Body of pancreas (tissue), 4 donors: ENCODE measurements at regions of chr11 and their contacts with region 1.

Region 1: DNA sequence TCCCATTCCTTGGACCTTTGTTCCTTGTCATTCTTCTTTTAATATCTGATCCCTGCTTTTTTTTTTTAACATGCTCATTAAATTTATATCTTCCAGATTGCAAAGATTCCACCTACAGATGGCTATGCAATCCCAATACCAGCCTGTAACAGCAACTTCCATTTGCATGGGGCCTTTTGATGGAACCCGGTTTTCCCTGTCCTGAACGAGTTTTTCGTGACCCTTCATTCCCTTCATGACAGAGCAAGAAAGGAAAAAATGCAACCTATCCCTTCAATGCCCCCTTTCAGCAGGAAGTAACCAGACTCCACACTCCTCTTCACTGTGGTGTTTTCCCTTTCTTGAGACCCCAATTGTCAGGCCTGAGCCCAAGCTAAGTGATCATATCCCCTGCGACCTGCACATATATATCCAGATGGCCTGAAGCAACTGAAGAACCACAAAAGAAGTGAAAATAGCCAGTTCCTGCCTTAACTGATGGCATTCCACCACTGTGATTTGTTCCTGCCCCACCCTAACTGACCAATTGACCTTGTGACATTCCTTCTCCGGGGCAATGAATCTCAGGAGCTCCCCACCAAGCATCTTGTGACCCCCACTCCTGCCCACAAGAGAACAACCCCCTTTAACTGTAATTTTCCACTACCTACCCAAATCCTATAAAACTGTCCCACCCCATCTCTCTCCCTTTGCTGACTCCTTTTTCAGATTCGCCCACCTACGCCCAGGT is 39.8 kb upstream of the AQP11 start:
- DNase-seq: no peak
- ATAC-seq: no peak
- H3K4me3 ChIP-seq: no peak overlapping the region
- H3K27ac ChIP-seq: no peak overlapping the region
- H3K4me1 ChIP-seq: no peaks in the 10 kb centered on the region
- H3K27me3 ChIP-seq: no peaks in the 10 kb centered on the region
- CTCF ChIP-seq: no peak
- POLR2A ChIP-seq: no peak

Region 2: DNA sequence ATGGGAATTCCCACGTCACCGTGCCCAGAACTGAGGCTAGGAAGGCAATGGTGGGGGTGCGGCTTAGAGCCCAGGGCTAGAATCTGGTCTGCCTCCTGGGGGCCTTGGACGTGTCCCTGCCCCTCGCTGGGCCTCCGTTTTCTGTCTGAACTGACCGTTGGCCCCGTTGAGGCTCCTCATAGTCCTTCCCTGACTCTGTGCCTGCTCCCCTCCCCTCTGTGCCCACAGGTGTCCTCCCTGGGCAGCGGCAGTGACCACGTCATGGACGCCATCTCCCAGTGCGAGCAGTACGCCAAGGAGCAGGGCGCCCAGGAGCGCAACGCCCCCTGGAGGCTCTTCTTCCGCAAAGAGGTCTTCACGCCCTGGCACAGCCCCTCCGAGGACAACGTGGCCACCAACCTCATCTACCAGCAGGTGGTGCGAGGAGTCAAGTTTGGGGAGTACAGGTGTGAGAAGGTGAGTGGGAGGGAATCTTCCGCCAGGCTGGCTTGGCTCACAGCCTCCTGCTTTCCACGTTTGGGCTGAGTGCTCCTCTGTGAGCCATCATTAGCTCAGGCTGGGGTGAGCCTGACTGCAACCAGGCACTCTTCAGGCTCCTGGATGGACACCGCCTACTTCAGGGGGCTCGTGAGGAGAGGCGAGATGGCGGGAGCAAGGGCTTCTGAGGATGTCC is 358.0 kb before region 1 on chr11:
- intact Hi-C with region 1: loop called (anchors 5 kb)
- DNase-seq: peak; percentile 85 to 93 (median 91)
- ATAC-seq: peak; percentile 91
- H3K4me3 ChIP-seq: no peak overlapping the region
- H3K27ac ChIP-seq: peak overlapping the region in 3 of 4 donors; percentile 12 to 54 (median 34)
- H3K4me1 ChIP-seq: peaks cover 12% of the 10 kb centered on the region
- H3K27me3 ChIP-seq: no peaks in the 10 kb centered on the region
- CTCF ChIP-seq: peak; percentile 77 to 98 (median 91)
- POLR2A ChIP-seq: peak in 2 of 3 donors; percentile 23 to 55

Region 3: DNA sequence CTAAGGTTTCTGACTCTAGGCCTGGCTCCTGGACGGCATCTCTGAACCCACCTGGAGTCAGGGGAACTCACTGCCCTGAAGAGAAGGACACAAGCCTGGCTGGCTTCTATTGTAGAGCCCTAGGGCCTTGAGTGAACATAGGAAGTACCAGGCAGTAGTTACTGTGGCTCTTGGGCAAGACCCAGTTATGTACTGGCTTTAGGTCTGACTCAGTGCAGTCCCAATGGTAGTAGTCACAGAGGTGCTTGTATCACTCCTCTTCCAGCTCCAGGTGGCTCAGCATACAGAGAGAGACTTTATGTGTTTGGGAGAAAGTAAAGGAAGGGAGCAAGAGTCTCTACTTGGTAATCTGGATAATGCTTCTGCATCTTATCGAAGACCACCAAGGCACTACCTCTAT is 62.2 kb before region 1 on chr11:
- intact Hi-C with region 1: no loop called
- DNase-seq: no peak
- ATAC-seq: no peak
- H3K4me3 ChIP-seq: no peak overlapping the region
- H3K27ac ChIP-seq: no peak overlapping the region
- H3K4me1 ChIP-seq: no peaks in the 10 kb centered on the region
- H3K27me3 ChIP-seq: no peaks in the 10 kb centered on the region
- CTCF ChIP-seq: no peak
- POLR2A ChIP-seq: no peak

Region 4: GRCh38 chr11:77589521-77590193 is 39.7 kb after region 1 on chr11 and contains the start of gene AQP11:
- intact Hi-C with region 1: no loop called
- DNase-seq: peak; percentile 90 to 96 (median 94)
- ATAC-seq: peak; percentile 92
- H3K4me3 ChIP-seq: peak within 1 kb of the TSS; percentile 44 to 71
- H3K27ac ChIP-seq: peak within 1 kb of the TSS; percentile 70 to 94 (median 88)
- H3K4me1 ChIP-seq: peaks cover 30% of the 10 kb centered on the region
- H3K27me3 ChIP-seq: no peaks in the 10 kb centered on the region
- CTCF ChIP-seq: peak in 1 of 7 experiments; percentile 7
- POLR2A ChIP-seq: peak; percentile 57 to 80 (median 77)
- total RNA-seq, gene AQP11: 1.6 TPM

Region 5: DNA sequence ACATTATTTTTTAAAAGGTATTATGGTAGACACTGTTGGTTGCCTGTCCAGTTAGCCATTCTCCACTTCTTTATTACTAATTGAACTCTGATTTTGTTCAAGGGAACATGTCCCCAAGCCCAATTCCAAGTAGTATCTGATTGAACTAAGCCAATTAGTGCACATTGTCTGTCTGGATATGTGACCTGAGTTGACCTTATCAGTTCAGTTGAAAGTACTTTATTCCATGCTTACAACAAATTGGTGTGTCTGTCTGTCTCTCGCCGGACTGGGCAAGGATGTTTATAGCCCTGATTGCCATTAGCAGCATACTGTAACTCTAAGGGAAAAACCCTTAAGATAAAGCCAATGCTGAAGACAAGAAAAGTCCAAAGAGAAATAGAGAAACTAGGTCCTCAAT is 358.8 kb after region 1 on chr11:
- intact Hi-C with region 1: no loop called
- DNase-seq: no peak
- ATAC-seq: no peak
- H3K4me3 ChIP-seq: no peak overlapping the region
- H3K27ac ChIP-seq: no peak overlapping the region
- H3K4me1 ChIP-seq: peaks cover 6% of the 10 kb centered on the region
- H3K27me3 ChIP-seq: no peaks in the 10 kb centered on the region
- CTCF ChIP-seq: no peak
- POLR2A ChIP-seq: no peak